Esophagus muscularis mucosa (tissue), 4 donors: ENCODE measurements at regions of chr10 and their contacts with region 1.

Region 1: DNA sequence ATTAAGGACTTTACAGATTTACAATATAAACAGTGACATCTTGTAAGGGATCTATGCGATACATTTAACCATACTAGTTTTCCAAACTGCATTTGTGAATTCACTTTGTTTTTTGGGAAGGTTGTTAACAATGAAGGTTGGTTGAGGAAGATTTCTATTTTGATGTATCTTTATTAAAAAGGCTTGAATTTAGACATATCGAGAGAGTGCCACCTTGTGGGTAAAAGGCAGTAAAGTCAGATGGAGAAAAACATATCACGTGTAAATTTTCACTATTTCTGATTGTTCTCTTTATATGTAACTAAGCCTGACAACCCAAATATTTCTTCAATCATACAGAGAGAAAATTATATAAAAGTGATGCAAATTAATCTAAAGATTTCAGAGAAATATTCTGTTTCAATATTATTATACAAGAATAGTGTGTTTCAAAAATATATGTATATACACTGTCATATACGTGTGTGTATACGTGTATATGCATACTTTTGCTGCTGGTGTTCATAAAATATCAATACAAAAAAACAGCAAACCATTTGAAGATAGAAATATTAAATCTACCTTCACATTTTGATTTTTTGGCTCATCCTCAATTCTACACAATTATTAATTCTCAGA is 988.6 kb downstream of the SORCS1 start:
- DNase-seq: no peak
- H3K4me3 ChIP-seq: no peak overlapping the region
- H3K27ac ChIP-seq: no peak overlapping the region
- H3K4me1 ChIP-seq: no peaks in the 10 kb centered on the region
- H3K27me3 ChIP-seq: no peaks in the 10 kb centered on the region
- CTCF ChIP-seq: peak; percentile 52 to 62 (median 55)
- EP300 ChIP-seq: no peak
- POLR2A ChIP-seq: no peak

Region 2: GRCh38 chr10:105950410-105950809 is 225.5 kb before region 1 on chr10:
- intact Hi-C with region 1: loop called (anchors 2 kb)
- DNase-seq: no peak
- H3K4me3 ChIP-seq: no peak overlapping the region
- H3K27ac ChIP-seq: peak overlapping the region; percentile 80 to 87 (median 82)
- H3K4me1 ChIP-seq: peaks cover 3 to 57% (median 27%) of the 10 kb centered on the region in 4 donors
- H3K27me3 ChIP-seq: no peaks in the 10 kb centered on the region
- CTCF ChIP-seq: peak; percentile 82 to 86 (median 84)
- EP300 ChIP-seq: no peak
- POLR2A ChIP-seq: no peak

Region 3: GRCh38 chr10:106023329-106023728 is 152.5 kb before region 1 on chr10:
- intact Hi-C with region 1: no loop called
- DNase-seq: no peak
- H3K4me3 ChIP-seq: no peak overlapping the region
- H3K27ac ChIP-seq: no peak overlapping the region
- H3K4me1 ChIP-seq: no peaks in the 10 kb centered on the region
- H3K27me3 ChIP-seq: no peaks in the 10 kb centered on the region
- CTCF ChIP-seq: no peak
- EP300 ChIP-seq: no peak
- POLR2A ChIP-seq: no peak